Right ventricle myocardium inferior (tissue), 1 donor: ENCODE measurements at regions of chr6 and their contacts with region 1.

Region 1: DNA sequence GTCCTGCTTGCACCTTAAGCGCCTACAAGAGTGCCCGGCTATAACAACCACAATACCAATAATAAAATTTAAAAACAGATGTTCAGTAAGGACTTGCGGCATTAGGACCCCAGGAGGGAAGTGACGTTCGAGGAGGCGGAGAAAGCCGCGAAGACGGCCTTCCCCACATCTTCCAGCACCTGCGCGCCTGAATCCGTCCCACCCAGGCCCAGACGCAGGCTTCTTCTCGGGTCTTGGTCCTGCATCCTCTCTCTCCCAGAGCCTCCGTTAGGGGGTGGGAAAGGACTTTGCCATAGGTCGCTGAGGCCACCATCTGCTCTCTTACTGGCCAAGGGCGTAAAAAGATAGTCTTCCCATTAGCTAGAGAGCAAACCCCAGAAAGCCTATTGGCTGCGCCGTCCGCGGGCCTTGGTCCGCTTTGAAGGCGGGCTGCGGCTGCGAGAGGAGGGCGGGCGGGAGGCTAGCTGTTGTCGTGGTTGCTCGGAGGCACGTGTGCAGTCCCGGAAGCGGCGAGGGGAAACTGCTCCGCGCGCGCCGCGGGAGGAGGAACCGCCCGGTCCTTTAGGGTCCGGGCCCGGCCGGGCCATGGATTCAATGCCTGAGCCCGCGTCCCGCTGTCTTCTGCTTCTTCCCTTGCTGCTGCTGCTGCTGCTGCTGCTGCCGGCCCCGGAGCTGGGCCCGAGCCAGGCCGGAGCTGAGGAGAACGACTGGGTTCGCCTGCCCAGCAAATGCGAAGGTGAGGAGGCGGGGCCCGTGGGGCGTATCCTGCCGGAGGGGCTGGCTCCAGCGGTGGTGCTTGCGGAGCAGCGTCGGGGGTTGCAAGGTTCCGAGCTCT is at the start of gene CNPY3:
- DNase-seq: peak; percentile 97
- ATAC-seq: peak; percentile 96
- total RNA-seq, gene CNPY3: 22.9 TPM

Region 2: GRCh38 chr6:42808492-42809483 is 120.4 kb before region 1 on chr6:
- intact Hi-C with region 1: no loop called
- DNase-seq: no peak
- ATAC-seq: no peak

Region 3: DNA sequence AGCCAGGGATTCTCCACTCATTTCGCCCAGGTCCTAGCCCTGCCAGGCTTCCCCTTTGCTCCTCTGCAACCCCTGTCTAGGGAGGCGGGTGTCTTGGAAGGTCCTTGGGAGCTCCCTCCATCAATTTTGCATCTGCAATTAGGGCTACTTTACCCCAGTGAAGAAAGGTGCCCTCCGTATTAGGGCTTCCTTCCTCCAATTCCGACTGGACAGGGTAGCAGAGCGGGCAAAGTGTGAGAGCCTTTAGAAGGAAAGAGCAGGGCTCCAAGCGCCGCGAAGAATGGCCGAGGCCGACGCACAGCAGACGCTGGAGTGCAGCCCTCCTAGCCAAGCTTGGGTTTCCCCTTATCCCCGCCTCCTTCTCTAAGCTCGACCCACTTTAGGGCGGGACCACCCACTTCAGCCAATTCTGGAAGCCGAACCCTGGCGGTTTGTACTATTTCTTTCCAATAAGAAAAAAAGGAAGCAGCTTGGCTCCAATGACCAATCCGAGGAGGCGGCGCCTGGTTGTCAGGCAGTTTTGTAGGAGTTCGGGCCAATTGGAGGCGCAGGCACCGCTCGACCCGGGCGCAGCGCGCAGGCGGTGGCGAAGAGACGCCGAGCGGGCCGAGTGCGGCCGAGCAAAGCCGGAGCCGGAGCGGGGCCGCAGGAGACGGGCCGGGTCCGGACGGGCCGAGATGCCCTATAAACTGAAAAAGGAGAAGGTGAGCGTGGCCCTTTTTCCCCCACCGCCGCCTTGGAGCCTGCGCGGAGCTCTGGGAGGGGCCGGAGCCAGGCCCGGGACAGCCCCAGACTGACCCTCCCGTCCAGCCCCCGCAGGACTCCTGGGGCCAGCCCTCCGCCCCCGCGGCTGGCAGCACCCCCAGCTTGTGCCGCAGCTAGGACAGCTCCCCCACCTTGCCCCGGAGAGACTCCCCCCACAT is 55.1 kb after region 1 on chr6 and contains the start of gene PPP2R5D:
- intact Hi-C with region 1: loop called (anchors 5 kb)
- DNase-seq: peak; percentile 99
- ATAC-seq: peak; percentile 96
- total RNA-seq, gene PPP2R5D: 34.2 TPM

Region 4: DNA sequence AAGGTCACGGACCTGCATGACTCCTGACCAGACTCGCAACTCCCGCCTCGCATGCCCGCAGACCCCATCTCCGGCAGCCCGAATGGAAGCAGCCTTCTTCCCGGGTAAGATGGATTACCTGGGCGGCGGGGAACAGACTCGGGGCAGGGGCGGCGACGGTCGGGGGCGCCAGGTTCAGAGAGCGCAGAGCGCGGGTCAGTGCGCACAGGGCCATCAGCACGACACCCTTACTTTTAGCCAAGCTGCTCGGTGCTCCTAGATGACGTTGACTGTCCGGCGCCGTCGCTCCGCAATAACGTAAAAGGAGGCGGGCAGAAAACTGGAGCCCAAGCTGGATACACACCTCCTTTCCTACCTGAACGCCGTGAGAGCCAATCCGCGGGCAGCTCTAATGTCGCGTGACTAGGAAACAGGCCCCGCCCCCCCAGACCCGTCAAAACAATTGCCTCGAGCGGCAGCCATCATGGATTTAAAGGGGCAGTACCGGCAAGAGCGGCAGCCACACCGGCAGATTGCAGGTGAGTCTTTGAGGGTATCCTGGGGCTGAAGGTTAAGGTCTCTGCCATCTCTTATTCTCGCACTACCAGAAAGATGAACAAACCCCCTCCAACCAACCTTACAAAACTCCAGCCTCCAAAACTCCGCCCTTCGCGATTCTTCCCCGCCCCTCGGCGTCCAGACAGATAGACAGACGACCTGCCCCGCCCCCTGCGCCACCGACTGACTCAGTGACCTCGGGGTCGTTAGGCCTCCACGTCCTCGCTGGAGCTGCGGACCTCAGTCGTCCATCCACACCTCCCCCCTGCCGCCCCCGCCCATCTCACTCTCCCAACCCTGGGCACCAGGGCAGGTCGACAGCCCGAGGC is 130.2 kb after region 1 on chr6 and contains the starts of genes KLC4 and MRPL2:
- intact Hi-C with region 1: no loop called
- DNase-seq: peak; percentile 98
- ATAC-seq: peak; percentile 98
- total RNA-seq, gene KLC4: 30.0 TPM
- total RNA-seq, gene MRPL2: 99.7 TPM